HepG2 (cell line): ENCODE measurements at regions of chr12 and their contacts with region 1.

Region 1: GRCh38 chr12:100391856-100392255 is 35.0 kb downstream of the SLC17A8 start:
- DNase-seq: peak; percentile 18
- ATAC-seq: no peak
- H3K4me3 ChIP-seq: no peak overlapping the region
- H3K27ac ChIP-seq: no peak overlapping the region
- H3K4me1 ChIP-seq: peaks cover 18% of the 10 kb centered on the region
- H3K27me3 ChIP-seq: no peaks in the 10 kb centered on the region
- CTCF ChIP-seq: peak; percentile 60
- EP300 ChIP-seq: no peak
- POLR2A ChIP-seq: no peak
- RAD21 ChIP-seq: no peak

Region 2: GRCh38 chr12:100554608-100555077 is 162.8 kb after region 1 on chr12:
- CTCF ChIA-PET with region 1: interaction called, 11 read pairs
- POLR2A ChIA-PET with region 1: no interaction called
- in situ Hi-C with region 1: no loop called
- intact Hi-C with region 1: loop called (anchors 2 kb)
- DNase-seq: peak; percentile 88
- ATAC-seq: peak; percentile 74
- H3K4me3 ChIP-seq: no peak overlapping the region
- H3K27ac ChIP-seq: peak overlapping the region; percentile 44
- H3K4me1 ChIP-seq: peaks cover 31% of the 10 kb centered on the region
- H3K27me3 ChIP-seq: no peaks in the 10 kb centered on the region; a peak in 1 of 5 replicates
- CTCF ChIP-seq: peak; percentile 82
- EP300 ChIP-seq: no peak
- POLR2A ChIP-seq: no peak
- RAD21 ChIP-seq: peak; percentile 84